Heart left ventricle (tissue), 16 donors: ENCODE measurements at regions of chr12 and their contacts with region 1.

Region 1: GRCh38 chr12:27523642-27524493 is at the start of gene PPFIBP1:
- DNase-seq: peak; percentile 98 to 99 (median 99)
- ATAC-seq: peak; percentile 97 to 98 (median 98)
- H3K4me3 ChIP-seq: peak within 1 kb of the TSS; percentile 48 to 91 (median 76)
- H3K27ac ChIP-seq: peak within 1 kb of the TSS; percentile 75 to 97 (median 92)
- H3K4me1 ChIP-seq: peaks cover 4 to 64% (median 43%) of the 10 kb centered on the region in 12 donors
- H3K27me3 ChIP-seq: no peaks in the 10 kb centered on the region
- CTCF ChIP-seq: peak in 7 of 12 donors; percentile 18 to 37 (median 26)
- POLR2A ChIP-seq: peak in 1 of 2 donors; percentile 94
- total RNA-seq, gene PPFIBP1: 141 to 413 (median 277) TPM

Region 2: DNA sequence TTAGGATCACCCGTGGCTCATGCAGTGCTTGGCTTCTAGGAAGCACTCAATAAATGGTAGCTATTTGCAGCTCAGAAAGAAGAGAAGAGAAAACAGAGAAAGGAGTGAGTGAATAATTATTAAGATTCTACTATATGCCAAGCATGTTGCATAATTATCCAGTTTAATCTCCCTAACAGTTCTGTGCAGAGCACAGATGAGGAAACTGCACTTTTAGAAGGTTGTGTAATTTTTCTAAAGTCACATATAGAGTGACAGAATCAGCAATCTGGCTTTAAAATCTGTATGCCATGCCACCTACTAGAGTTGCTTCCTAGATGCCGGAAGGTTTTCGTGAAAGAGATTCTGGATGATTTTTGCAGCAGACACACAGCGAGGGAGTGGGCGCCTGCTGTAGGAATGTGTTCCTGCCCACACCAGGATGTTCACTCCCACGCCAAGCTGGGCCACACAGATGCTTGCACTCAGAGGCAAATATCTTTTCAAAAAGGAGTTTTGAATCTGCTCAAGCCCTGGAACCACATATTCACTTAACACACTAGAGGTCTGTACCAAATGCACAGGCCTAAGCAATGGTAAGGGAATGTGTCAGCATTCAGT is 127.6 kb before region 1 on chr12:
- intact Hi-C with region 1: no loop called
- DNase-seq: no peak
- ATAC-seq: no peak
- H3K4me3 ChIP-seq: no peak overlapping the region
- H3K27ac ChIP-seq: no peak overlapping the region
- H3K4me1 ChIP-seq: no peaks in the 10 kb centered on the region
- H3K27me3 ChIP-seq: no peaks in the 10 kb centered on the region
- CTCF ChIP-seq: no peak
- POLR2A ChIP-seq: no peak

Region 3: GRCh38 chr12:27549801-27550652 is 26.2 kb after region 1 on chr12:
- intact Hi-C with region 1: loop called in 1 of 10 experiments (anchors 2 kb)
- DNase-seq: peak; percentile 85 to 91 (median 88)
- ATAC-seq: peak; percentile 81 to 90 (median 89)
- H3K4me3 ChIP-seq: peak overlapping the region in 8 of 12 donors; percentile 3 to 28 (median 18)
- H3K27ac ChIP-seq: peak overlapping the region; percentile 68 to 94 (median 87)
- H3K4me1 ChIP-seq: peaks cover 17 to 100% (median 89%) of the 10 kb centered on the region in 12 donors
- H3K27me3 ChIP-seq: no peaks in the 10 kb centered on the region
- CTCF ChIP-seq: no peak
- POLR2A ChIP-seq: no peak

Region 4: DNA sequence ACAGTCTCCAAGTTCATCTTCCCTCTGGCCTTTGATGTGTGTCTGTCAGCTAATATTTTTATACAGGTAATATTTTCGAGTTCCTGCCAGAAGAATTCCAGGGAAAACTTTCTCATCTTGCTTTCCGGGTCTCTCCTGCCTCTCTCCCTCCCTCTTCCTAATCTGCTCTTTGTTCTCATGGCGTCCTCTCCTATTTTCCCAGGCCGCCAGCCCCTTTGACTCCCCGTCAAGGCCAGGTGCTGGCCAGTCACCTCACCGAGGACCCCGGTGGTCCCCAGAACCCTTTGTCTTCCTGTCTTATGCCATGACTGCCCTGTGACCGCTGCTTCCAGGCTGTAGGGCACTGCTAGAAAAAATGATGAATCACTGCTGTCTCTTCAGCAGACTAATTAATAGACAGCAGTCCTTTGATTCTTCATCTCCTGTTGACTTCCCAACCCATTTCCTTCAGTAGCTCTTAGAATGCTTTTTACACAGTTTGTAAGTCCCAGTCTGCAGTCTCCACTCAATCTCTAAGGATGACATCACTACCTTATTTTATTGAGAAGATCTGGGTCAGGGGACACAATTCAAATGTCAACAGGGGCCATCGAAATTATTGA is 40.8 kb after region 1 on chr12:
- intact Hi-C with region 1: loop called in 1 of 10 experiments (anchors 5 kb)
- DNase-seq: no peak
- ATAC-seq: peak in 3 of 4 donors; percentile 27 to 30 (median 29)
- H3K4me3 ChIP-seq: no peak overlapping the region
- H3K27ac ChIP-seq: peak overlapping the region in 10 of 12 donors; percentile 9 to 66 (median 38)
- H3K4me1 ChIP-seq: peaks cover 8 to 82% (median 59%) of the 10 kb centered on the region in 12 donors
- H3K27me3 ChIP-seq: no peaks in the 10 kb centered on the region
- CTCF ChIP-seq: no peak
- POLR2A ChIP-seq: no peak

Region 5: DNA sequence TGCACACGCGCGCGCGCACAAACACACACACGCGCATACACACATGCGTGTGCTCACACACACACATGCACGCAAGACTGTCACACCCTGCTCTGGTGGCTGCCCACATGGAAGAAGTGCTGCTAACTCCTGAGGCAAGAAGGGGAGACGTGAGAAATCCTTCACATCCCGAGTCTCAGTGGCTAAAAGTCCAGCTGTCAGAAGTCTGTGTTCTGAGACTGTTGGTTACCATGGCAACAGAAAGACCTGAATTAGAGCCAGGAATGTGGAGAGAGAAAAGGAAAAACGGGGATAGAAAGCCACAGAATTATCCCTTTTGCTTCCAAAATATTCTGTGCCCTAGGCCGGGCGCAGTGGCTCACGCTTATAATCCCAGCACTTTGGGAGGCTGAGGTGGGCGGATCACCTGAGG is 71.4 kb after region 1 on chr12:
- intact Hi-C with region 1: no loop called
- DNase-seq: peak in 3 of 5 donors; percentile 56 to 74 (median 67)
- ATAC-seq: peak; percentile 51 to 70 (median 62)
- H3K4me3 ChIP-seq: peak overlapping the region in 1 of 12 donors; percentile 16
- H3K27ac ChIP-seq: peak overlapping the region in 7 of 12 donors; percentile 2 to 65 (median 52)
- H3K4me1 ChIP-seq: peaks cover 6 to 73% (median 39%) of the 10 kb centered on the region in 12 donors
- H3K27me3 ChIP-seq: no peaks in the 10 kb centered on the region
- CTCF ChIP-seq: no peak
- POLR2A ChIP-seq: no peak

Region 6: GRCh38 chr12:27635349-27635972 is 111.6 kb after region 1 on chr12:
- intact Hi-C with region 1: loop called in 7 of 10 experiments (anchors 5 kb)
- DNase-seq: no peak
- ATAC-seq: peak in 2 of 4 donors; percentile 24 to 26
- H3K4me3 ChIP-seq: no peak overlapping the region
- H3K27ac ChIP-seq: peak overlapping the region in 1 of 12 donors; percentile 11
- H3K4me1 ChIP-seq: peaks cover 0 to 55% (median 28%) of the 10 kb centered on the region in 12 donors
- H3K27me3 ChIP-seq: no peaks in the 10 kb centered on the region
- CTCF ChIP-seq: peak; percentile 44 to 77 (median 64)
- POLR2A ChIP-seq: no peak

Region 7: GRCh38 chr12:27644158-27644845 is 120.4 kb after region 1 on chr12:
- intact Hi-C with region 1: loop called in 3 of 10 experiments (anchors 5 kb)
- DNase-seq: no peak
- ATAC-seq: no peak
- H3K4me3 ChIP-seq: no peak overlapping the region
- H3K27ac ChIP-seq: no peak overlapping the region
- H3K4me1 ChIP-seq: peaks cover 0 to 37% (median 16%) of the 10 kb centered on the region in 12 donors
- H3K27me3 ChIP-seq: no peaks in the 10 kb centered on the region
- CTCF ChIP-seq: no peak
- POLR2A ChIP-seq: no peak

Region 8: GRCh38 chr12:27652174-27652763 is 128.4 kb after region 1 on chr12:
- intact Hi-C with region 1: loop called in 5 of 10 experiments (anchors 5 kb)
- DNase-seq: peak in 2 of 5 donors; percentile 56 to 73
- ATAC-seq: peak; percentile 67 to 87 (median 78)
- H3K4me3 ChIP-seq: no peak overlapping the region
- H3K27ac ChIP-seq: no peak overlapping the region
- H3K4me1 ChIP-seq: peaks cover 0 to 10% (median 2%) of the 10 kb centered on the region in 12 donors
- H3K27me3 ChIP-seq: no peaks in the 10 kb centered on the region
- CTCF ChIP-seq: peak; percentile 79 to 95 (median 90)
- POLR2A ChIP-seq: no peak